Right ventricle myocardium superior (tissue), 1 donor: ENCODE measurements at regions of chr7 and their contacts with region 1.

Region 1: GRCh38 chr7:131336956-131337355 is 9.3 kb downstream of the MKLN1 start:
- DNase-seq: no peak
- ATAC-seq: no peak

Region 2: GRCh38 chr7:130875265-130875741 is 461.7 kb before region 1 on chr7:
- intact Hi-C with region 1: no loop called
- DNase-seq: no peak
- ATAC-seq: peak; percentile 84

Region 3: GRCh38 chr7:131409129-131409766 is 72.3 kb after region 1 on chr7:
- intact Hi-C with region 1: no loop called
- DNase-seq: no peak
- ATAC-seq: no peak

Region 4: GRCh38 chr7:131424219-131424822 is 87.4 kb after region 1 on chr7:
- intact Hi-C with region 1: loop called (anchors 10 kb)
- DNase-seq: no peak
- ATAC-seq: peak; percentile 64